Keratinocyte (primary cell): ENCODE measurements at regions of chr11 and their contacts with region 1.

Region 1: DNA sequence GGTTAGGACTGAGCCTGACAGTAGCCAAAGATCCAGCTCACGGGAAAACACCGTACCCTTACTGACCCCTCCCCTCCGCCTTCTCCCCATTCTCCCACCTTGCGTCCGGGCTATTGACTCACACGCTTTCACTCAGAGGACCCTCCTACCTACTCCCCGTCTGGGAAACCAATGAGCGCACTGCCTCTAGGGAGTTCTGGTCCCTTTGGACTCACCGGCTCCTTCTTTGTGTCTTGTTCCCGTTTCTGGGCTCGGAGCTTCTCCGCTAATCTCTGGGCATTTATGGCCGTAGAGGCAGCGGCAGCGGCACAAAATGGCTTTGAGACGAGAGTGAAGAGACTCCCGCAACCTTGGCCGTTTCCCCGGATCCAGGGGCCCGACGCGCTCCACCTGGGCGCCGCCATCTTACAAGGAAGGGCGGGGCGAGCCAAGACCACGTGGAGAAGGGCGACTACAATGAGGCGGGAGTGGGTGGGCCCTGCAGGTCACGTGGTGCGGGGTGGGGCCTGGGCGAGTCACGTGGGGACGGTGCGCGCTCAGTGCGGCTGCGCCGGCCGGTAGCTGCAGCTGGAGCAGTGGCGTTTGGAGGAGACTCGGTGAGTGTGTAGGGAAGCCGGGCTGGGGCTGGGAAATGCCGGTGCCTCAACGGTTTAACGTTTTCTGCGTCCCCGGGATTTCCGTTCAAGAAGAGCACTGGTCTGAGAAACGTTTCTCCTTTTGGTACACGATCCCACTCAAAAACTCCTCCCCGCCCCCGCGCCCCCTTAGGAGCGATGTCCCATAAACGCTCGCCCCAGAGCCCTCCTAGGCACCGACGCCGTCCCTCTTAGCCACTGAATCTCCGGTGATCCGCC is at the starts of genes FAM118B and RPUSD4:
- DNase-seq: peak; percentile 75
- H3K4me3 ChIP-seq: peak within 1 kb of the TSS; percentile 56 to 89 (median 78)
- H3K27ac ChIP-seq: peak within 1 kb of the TSS; percentile 75
- H3K4me1 ChIP-seq: peaks cover 16% of the 10 kb centered on the region
- H3K27me3 ChIP-seq: no peaks in the 10 kb centered on the region
- CTCF ChIP-seq: no peak
- polyA plus RNA-seq, gene FAM118B: 26.5 to 32.0 TPM (median 28.0 TPM) in 3 replicates
- polyA plus RNA-seq, gene RPUSD4: 23.8 to 24.7 TPM (median 23.8 TPM) in 3 replicates

Region 2: GRCh38 chr11:125941619-125942611 is 269.5 kb before region 1 on chr11:
- dilution Hi-C with region 1: loop called (anchors 25 kb)
- DNase-seq: no peak
- H3K4me3 ChIP-seq: no peak overlapping the region
- H3K27ac ChIP-seq: no peak overlapping the region
- H3K4me1 ChIP-seq: no peaks in the 10 kb centered on the region
- H3K27me3 ChIP-seq: no peaks in the 10 kb centered on the region
- CTCF ChIP-seq: peak; percentile 87 to 91 (median 91)

Region 3: GRCh38 chr11:126102436-126102981 is 109.0 kb before region 1 on chr11:
- dilution Hi-C with region 1: no loop called
- DNase-seq: no peak
- H3K4me3 ChIP-seq: no peak overlapping the region
- H3K27ac ChIP-seq: no peak overlapping the region
- H3K4me1 ChIP-seq: no peaks in the 10 kb centered on the region
- H3K27me3 ChIP-seq: no peaks in the 10 kb centered on the region
- CTCF ChIP-seq: no peak